Heart left ventricle (tissue), 16 donors: ENCODE measurements at regions of chr11 and their contacts with region 1.

Region 1: GRCh38 chr11:20387241-20388095 is at the start of gene PRMT3:
- DNase-seq: peak; percentile 96 to 98 (median 97)
- ATAC-seq: peak; percentile 94 to 98 (median 98)
- H3K4me3 ChIP-seq: peak within 1 kb of the TSS; percentile 70 to 93 (median 84)
- H3K27ac ChIP-seq: peak within 1 kb of the TSS; percentile 80 to 97 (median 92)
- H3K4me1 ChIP-seq: peaks cover 0 to 22% (median 13%) of the 10 kb centered on the region in 12 donors
- H3K27me3 ChIP-seq: no peaks in the 10 kb centered on the region
- CTCF ChIP-seq: peak; percentile 77 to 99 (median 94)
- POLR2A ChIP-seq: peak in 1 of 2 donors; percentile 79
- total RNA-seq, gene PRMT3: 9.9 to 15.0 (median 10.5) TPM

Region 2: DNA sequence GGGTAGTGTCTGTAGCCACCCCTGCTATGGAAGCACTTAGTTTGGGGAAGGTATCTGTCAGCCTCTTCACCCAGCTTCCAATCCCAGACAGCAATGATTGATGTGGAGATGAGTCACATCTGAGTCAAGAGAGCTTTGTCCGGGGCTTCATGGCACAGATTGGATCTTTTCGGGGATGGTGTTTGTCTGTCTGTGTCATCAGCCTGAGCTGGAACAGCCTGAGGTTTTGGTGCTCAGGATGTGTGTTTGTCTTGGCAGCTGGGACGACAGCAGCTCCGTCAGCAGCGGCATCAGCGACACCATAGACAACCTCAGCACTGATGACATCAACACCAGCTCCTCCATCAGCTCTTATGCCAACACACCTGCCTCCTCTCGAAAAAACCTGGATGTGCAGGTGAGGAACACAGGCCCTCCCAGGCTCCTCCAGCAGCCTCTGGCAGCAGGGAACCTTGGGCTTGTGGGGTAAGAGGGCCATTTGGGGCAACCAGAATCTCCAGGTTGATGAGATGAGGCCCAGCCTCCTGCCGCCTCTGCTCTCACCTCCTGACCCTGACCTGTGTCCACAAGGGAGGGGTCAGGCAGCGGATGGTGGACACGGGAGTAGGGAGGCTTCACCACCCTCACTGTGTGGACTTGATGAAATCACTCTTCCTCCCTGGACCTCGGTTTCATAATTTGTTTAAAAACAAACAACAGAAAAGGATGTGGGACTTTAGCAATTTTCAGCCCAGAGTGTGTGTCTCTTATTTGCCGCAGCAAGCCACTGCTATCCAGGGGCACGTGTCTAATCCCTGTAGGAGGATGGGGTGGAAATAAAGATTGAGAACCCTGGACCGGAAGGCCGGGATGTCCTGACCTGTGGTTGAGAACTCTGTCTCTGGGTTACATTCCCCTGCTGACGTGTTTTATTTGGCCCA is 351.5 kb before region 1 on chr11:
- intact Hi-C with region 1: no loop called
- DNase-seq: no peak
- ATAC-seq: peak in 1 of 4 donors; percentile 35
- H3K4me3 ChIP-seq: no peak overlapping the region
- H3K27ac ChIP-seq: peak overlapping the region in 1 of 12 donors; percentile 22
- H3K4me1 ChIP-seq: peaks cover 0 to 57% (median 6%) of the 10 kb centered on the region in 12 donors
- H3K27me3 ChIP-seq: no peaks in the 10 kb centered on the region
- CTCF ChIP-seq: no peak
- POLR2A ChIP-seq: no peak

Region 3: DNA sequence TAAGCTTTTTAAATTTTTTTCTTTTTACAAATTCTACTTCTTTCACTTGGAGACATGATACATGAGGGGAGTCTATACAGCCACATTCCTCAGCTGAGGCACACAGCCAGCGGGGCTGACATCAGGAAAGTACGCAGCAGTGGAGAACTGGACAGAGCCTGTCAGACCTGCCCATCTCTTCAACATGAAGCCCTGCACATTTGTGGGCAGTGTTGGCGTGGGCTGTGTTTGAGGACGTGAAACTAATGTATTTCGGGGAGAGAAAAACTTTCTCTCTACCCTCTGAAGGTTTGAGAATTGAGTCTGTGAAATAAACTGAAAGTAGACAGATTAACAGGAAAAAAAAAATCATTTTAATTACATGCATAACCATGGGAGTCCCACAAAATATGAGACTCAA is 108.7 kb before region 1 on chr11:
- intact Hi-C with region 1: no loop called
- DNase-seq: no peak
- ATAC-seq: no peak
- H3K4me3 ChIP-seq: no peak overlapping the region
- H3K27ac ChIP-seq: no peak overlapping the region
- H3K4me1 ChIP-seq: no peaks in the 10 kb centered on the region
- H3K27me3 ChIP-seq: peaks cover 0 to 10% (median 0%) of the 10 kb centered on the region in 9 donors
- CTCF ChIP-seq: no peak
- POLR2A ChIP-seq: no peak

Region 4: GRCh38 chr11:20474176-20474881 is 86.9 kb after region 1 on chr11:
- intact Hi-C with region 1: loop called in 1 of 10 experiments (anchors 5 kb)
- DNase-seq: peak in 1 of 5 donors; percentile 30
- ATAC-seq: peak; percentile 78 to 95 (median 90)
- H3K4me3 ChIP-seq: no peak overlapping the region
- H3K27ac ChIP-seq: peak overlapping the region in 11 of 12 donors; percentile 7 to 83 (median 48)
- H3K4me1 ChIP-seq: peaks cover 0 to 22% (median 5%) of the 10 kb centered on the region in 12 donors
- H3K27me3 ChIP-seq: no peaks in the 10 kb centered on the region
- CTCF ChIP-seq: no peak
- POLR2A ChIP-seq: peak in 1 of 2 donors; percentile 25